ENCODE measurements at regions of chr10 and their contacts with region 1.

Region 1: GRCh38 chr10:34339816-34340553 is 475.1 kb downstream of the PARD3 start:
- DNase-seq: no peak
- H3K4me3 ChIP-seq: no peak overlapping the region
- H3K27ac ChIP-seq: no peak overlapping the region
- H3K4me1 ChIP-seq: no peaks in the 10 kb centered on the region
- H3K27me3 ChIP-seq: no peaks in the 10 kb centered on the region
- CTCF ChIP-seq: no peak
- POLR2A ChIP-seq: no peak

Region 2: DNA sequence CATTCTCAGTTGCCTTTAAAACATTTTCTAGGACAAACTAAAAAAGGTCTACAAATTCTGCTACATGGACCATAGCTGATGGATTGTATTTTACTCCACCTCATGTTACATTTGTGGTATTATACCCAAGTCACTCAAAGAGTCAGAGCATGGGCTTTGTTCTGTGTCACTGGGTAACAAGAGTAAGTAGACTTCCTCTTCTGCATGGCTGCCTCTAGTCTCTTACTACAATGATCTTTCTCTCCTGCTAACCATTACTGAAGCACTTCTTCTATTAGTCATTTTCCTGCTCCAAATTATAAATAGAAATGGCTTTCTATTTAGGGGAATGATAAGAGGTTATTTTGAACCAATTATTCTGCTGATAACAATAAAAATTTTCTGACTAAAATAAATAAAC is 278.1 kb before region 1 on chr10:
- intact Hi-C with region 1: loop called (anchors 5 kb)
- DNase-seq: no peak
- H3K4me3 ChIP-seq: no peak overlapping the region
- H3K27ac ChIP-seq: no peak overlapping the region
- H3K4me1 ChIP-seq: no peaks in the 10 kb centered on the region
- H3K27me3 ChIP-seq: no peaks in the 10 kb centered on the region
- CTCF ChIP-seq: no peak
- POLR2A ChIP-seq: no peak

Measured in breast epithelium (tissue), 4 donors.